ENCODE measurements at regions of chr1 and their contacts with region 1.

Region 1: DNA sequence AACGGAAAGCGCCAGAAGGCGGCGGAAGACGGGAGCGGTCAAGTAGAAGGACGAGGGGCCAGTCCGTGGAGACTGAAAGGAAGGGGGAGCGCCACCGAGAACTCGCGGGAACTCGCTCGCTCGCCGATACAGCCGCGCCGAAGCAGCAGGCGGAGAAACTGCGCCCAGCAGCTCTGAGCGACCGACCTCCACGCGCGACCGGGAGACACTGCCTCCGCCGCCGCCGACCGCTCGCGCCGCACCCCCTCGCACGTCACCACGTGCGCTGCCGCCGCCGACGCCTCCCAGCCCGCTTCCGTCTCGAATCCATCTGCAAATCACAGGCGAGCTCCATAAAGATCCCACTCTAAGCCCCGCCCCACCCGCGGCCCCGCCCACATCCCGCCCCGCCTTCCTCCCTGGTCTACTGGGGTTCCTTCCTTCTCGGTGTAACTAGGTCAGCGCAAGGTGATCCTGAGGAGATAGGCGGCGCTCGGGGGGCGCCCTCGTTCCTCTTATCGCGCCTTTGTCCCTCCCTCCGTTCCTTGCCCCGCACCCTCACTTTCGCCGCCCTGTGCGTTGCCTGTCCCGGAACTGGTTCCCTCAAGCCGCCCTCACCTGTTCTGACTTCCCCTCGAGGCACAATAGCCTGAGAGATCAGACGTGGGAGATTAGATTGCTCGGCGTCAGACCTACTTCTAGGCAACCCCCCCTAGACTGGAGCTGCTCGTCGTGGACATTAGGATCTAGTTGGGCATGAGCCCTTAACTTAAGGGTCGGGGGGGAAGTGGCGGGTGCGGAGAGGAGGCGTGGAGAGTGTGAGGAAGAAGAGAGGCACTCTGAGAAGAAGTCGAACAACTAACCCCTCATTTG is at the start of gene IVNS1ABP:
- DNase-seq: peak; percentile 98
- ATAC-seq: peak; percentile 76
- H3K4me3 ChIP-seq: peak within 1 kb of the TSS; percentile 94 to 98 (median 96)
- H3K4me3 Mint-ChIP-seq: peak within 1 kb of the TSS; percentile 92
- H3K27ac ChIP-seq: peak within 1 kb of the TSS; percentile 95 to 98
- H3K27ac Mint-ChIP-seq: peak within 1 kb of the TSS; percentile 98
- H3K4me1 ChIP-seq: peaks cover 34 to 41% of the 10 kb centered on the region in 2 donors
- H3K4me1 Mint-ChIP-seq: peaks cover 49% of the 10 kb centered on the region
- H3K27me3 ChIP-seq: no peaks in the 10 kb centered on the region
- H3K27me3 Mint-ChIP-seq: no peaks in the 10 kb centered on the region
- CTCF ChIP-seq: peak; percentile 39
- total RNA-seq, gene IVNS1ABP: 87.0 and 93.8 TPM in 2 replicates

Region 2: GRCh38 chr1:183590244-183591191 is 1726.7 kb before region 1 on chr1 and contains the start of gene NCF2:
- CTCF ChIA-PET with region 1: no interaction called
- POLR2A ChIA-PET with region 1: no interaction called
- intact Hi-C with region 1: loop called (anchors 5 kb)
- DNase-seq: peak; percentile 91
- ATAC-seq: peak; percentile 84
- H3K4me3 ChIP-seq: peak within 1 kb of the TSS; percentile 20 to 81 (median 42)
- H3K4me3 Mint-ChIP-seq: peak within 1 kb of the TSS; percentile 37
- H3K27ac ChIP-seq: peak within 1 kb of the TSS; percentile 91 to 93
- H3K27ac Mint-ChIP-seq: peak within 1 kb of the TSS; percentile 95
- H3K4me1 ChIP-seq: peaks cover 61 to 64% of the 10 kb centered on the region in 2 donors
- H3K4me1 Mint-ChIP-seq: peaks cover 60% of the 10 kb centered on the region
- H3K27me3 ChIP-seq: no peaks in the 10 kb centered on the region
- H3K27me3 Mint-ChIP-seq: no peaks in the 10 kb centered on the region
- CTCF ChIP-seq: no peak
- total RNA-seq, gene NCF2: 10.5 and 10.7 TPM in 2 replicates

Region 3: DNA sequence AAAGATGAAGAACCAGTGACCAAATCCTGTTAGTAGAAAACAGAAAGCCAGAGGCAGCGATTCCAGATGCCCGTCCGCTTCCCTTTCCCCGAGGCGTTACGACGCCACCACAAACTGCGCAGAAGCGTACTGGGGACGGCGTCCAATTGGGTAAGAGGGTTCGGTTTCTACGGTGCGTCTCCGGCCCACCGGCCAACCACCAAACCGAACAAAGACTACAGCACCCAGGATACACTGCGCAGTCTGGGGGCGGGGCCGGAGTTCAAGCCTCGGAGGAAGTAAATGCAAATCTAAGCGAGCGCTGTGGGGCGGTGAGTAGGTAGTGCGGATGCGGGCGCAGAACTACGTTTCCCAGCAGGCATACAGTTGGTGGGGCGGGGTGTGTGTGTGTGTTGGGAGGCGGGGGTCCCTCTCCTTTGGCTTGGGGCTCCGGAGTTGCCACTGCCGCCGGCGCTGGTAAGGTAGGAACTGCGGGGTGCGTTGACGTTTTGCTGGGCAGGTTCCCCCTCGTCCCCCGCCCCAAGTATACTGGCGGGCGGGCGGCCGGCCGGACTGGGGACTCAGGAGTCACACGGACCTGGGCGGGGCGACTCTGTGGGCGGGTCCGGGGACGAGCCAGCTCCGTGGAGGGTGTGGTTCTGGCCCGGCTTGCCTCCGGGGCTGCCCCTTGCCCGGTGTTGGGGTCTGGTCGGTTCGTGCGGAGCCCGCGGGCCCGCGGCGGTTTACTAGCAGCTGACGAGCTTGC is 160.2 kb before region 1 on chr1 and contains the starts of genes SWT1 and TRMT1L:
- CTCF ChIA-PET with region 1: interaction called, 9 read pairs
- POLR2A ChIA-PET with region 1: interaction called, 5 read pairs
- intact Hi-C with region 1: loop called (anchors 1 kb)
- DNase-seq: peak; percentile 100
- ATAC-seq: peak; percentile 83
- H3K4me3 ChIP-seq: peak within 1 kb of the TSS; percentile 80 to 99 (median 98)
- H3K4me3 Mint-ChIP-seq: peak within 1 kb of the TSS; percentile 93
- H3K27ac ChIP-seq: peak within 1 kb of the TSS; percentile 98 to 100
- H3K27ac Mint-ChIP-seq: peak within 1 kb of the TSS; percentile 97
- H3K4me1 ChIP-seq: peaks cover 11 to 36% of the 10 kb centered on the region in 2 donors
- H3K4me1 Mint-ChIP-seq: peaks cover 44% of the 10 kb centered on the region
- H3K27me3 ChIP-seq: no peaks in the 10 kb centered on the region
- H3K27me3 Mint-ChIP-seq: no peaks in the 10 kb centered on the region
- CTCF ChIP-seq: no peak
- total RNA-seq, gene SWT1: 8.5 and 9.2 TPM in 2 replicates
- total RNA-seq, gene TRMT1L: 27.5 and 33.2 TPM in 2 replicates

Region 4: GRCh38 chr1:185291652-185292051 is 25.6 kb before region 1 on chr1:
- CTCF ChIA-PET with region 1: no interaction called
- POLR2A ChIA-PET with region 1: no interaction called
- intact Hi-C with region 1: no loop called
- DNase-seq: peak; percentile 49
- ATAC-seq: no peak
- H3K4me3 ChIP-seq: no peak overlapping the region
- H3K4me3 Mint-ChIP-seq: no peak overlapping the region
- H3K27ac ChIP-seq: peak overlapping the region in 1 of 2 donors; percentile 46
- H3K27ac Mint-ChIP-seq: no peak overlapping the region
- H3K4me1 ChIP-seq: peaks cover 14 to 22% of the 10 kb centered on the region in 2 donors
- H3K4me1 Mint-ChIP-seq: peaks cover 24% of the 10 kb centered on the region
- H3K27me3 ChIP-seq: no peaks in the 10 kb centered on the region
- H3K27me3 Mint-ChIP-seq: no peaks in the 10 kb centered on the region
- CTCF ChIP-seq: no peak

Region 5: DNA sequence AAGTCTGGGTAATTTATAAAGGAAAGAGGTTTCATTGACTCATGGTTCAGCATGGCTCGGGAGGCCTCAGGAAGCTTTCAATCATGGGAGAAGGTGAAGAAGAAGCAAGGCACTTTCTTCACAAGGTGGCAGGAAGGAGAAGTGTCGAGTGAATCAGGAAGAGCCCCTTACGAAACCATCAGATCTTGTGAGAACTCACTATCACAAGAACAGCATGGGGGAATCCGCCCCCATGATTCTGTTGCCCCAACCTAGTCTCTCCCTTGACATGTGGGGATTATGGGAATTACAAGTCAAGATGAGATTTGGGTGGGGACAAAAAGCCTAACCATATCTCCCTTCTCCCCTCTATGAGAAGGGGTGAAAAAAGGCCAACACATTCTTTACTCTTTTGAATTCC is 11.0 kb after region 1 on chr1:
- CTCF ChIA-PET with region 1: no interaction called
- POLR2A ChIA-PET with region 1: no interaction called
- intact Hi-C with region 1: no loop called
- DNase-seq: no peak
- ATAC-seq: no peak
- H3K4me3 ChIP-seq: no peak overlapping the region
- H3K4me3 Mint-ChIP-seq: no peak overlapping the region
- H3K27ac ChIP-seq: no peak overlapping the region
- H3K27ac Mint-ChIP-seq: no peak overlapping the region
- H3K4me1 ChIP-seq: no peaks in the 10 kb centered on the region
- H3K4me1 Mint-ChIP-seq: no peaks in the 10 kb centered on the region
- H3K27me3 ChIP-seq: no peaks in the 10 kb centered on the region
- H3K27me3 Mint-ChIP-seq: no peaks in the 10 kb centered on the region
- CTCF ChIP-seq: no peak

Region 6: DNA sequence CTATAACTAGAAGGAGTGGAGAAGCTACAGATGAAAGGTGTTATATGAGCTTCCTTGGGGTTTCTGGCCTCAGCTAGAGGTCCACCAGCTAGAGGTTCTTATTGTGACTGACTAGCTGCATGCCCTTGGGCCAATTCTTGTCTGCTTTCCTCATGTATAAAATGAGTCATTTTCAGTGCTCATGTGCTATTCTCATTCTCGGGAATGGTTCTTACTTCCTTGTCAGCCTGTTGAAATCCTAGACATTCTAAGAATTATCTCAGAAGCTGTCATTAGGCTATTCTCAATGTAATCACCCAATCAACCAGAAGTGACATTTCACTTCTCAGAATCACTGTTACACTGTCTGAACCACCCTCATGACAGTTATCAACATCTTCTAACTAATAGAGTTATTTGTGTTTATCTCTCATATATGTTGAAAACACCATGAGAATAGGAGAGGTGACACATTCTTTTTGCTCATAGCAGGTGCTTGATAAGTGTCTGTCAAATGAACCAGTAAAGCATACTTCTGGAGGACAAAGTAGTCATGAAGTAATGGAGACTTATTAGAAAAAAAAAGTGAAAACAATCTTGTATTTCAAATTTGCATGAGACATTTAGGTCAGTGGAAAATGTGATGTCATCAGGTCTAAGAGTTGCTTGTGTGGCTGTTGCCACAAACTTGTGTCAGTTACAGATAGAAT is 122.6 kb after region 1 on chr1:
- CTCF ChIA-PET with region 1: no interaction called
- POLR2A ChIA-PET with region 1: no interaction called
- intact Hi-C with region 1: loop called (anchors 1 kb)
- DNase-seq: peak; percentile 51
- ATAC-seq: peak; percentile 83
- H3K4me3 ChIP-seq: no peak overlapping the region
- H3K4me3 Mint-ChIP-seq: no peak overlapping the region
- H3K27ac ChIP-seq: peak overlapping the region in 1 of 2 donors; percentile 54
- H3K27ac Mint-ChIP-seq: no peak overlapping the region
- H3K4me1 ChIP-seq: peaks cover 14 to 17% of the 10 kb centered on the region in 2 donors
- H3K4me1 Mint-ChIP-seq: peaks cover 3% of the 10 kb centered on the region
- H3K27me3 ChIP-seq: no peaks in the 10 kb centered on the region
- H3K27me3 Mint-ChIP-seq: no peaks in the 10 kb centered on the region
- CTCF ChIP-seq: no peak

Region 7: DNA sequence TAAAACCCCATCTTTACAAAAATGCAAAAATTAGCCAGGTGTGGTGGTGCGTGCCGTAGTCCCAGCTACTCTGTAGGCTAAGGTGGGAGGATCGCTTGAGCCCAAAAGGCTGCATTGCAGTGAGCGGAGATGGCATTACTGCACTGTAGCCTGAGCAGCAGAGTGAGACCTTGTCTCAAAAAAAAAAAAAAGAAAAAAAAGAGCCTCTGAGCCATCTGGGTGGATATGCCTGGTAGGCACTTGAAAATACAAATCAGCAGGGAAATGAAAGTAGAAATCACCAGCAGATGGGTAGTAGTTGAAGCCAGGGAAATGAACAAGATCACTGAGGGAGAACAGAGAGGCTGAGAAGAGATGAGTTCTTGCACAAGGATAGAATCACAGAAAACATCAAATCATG is 285.9 kb after region 1 on chr1:
- CTCF ChIA-PET with region 1: interaction called, 4 read pairs
- POLR2A ChIA-PET with region 1: interaction called, 8 read pairs
- intact Hi-C with region 1: loop called (anchors 2 kb)
- DNase-seq: peak; percentile 86
- ATAC-seq: peak; percentile 93
- H3K4me3 ChIP-seq: peak overlapping the region in 1 of 5 experiments; percentile 42
- H3K4me3 Mint-ChIP-seq: no peak overlapping the region
- H3K27ac ChIP-seq: peak overlapping the region; percentile 27 to 56
- H3K27ac Mint-ChIP-seq: no peak overlapping the region
- H3K4me1 ChIP-seq: peaks cover 54 to 68% of the 10 kb centered on the region in 2 donors
- H3K4me1 Mint-ChIP-seq: peaks cover 31% of the 10 kb centered on the region
- H3K27me3 ChIP-seq: no peaks in the 10 kb centered on the region
- H3K27me3 Mint-ChIP-seq: no peaks in the 10 kb centered on the region
- CTCF ChIP-seq: no peak

Region 8: DNA sequence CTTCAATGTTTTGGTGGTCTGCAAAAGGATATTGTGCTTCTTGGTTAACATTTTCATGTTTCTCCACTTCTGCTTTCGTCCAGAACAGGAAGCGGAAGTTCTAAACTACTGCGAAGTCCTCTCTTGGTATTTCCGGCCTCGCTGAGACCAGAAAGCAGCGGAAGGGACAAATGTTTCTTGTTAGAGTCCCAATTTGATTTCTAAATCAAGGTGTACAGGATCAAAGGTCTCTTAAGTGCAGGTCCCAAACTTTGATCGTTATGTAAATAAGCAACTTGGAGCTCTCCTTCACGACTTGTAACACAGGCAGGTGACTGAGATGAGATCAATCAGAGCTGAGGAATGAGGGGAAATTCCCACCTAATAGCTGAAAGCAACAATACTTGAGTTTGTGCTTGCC is 376.8 kb after region 1 on chr1:
- CTCF ChIA-PET with region 1: interaction called, 14 read pairs
- POLR2A ChIA-PET with region 1: interaction called, 8 read pairs
- intact Hi-C with region 1: loop called (anchors 1 kb)
- DNase-seq: peak; percentile 88
- ATAC-seq: peak; percentile 81
- H3K4me3 ChIP-seq: peak overlapping the region; percentile 30 to 67 (median 52)
- H3K4me3 Mint-ChIP-seq: peak overlapping the region; percentile 91
- H3K27ac ChIP-seq: peak overlapping the region; percentile 95 to 96
- H3K27ac Mint-ChIP-seq: peak overlapping the region; percentile 98
- H3K4me1 ChIP-seq: peaks cover 18 to 19% of the 10 kb centered on the region in 2 donors
- H3K4me1 Mint-ChIP-seq: peaks cover 22% of the 10 kb centered on the region
- H3K27me3 ChIP-seq: peaks cover 0 to 2% (median 0%) of the 10 kb centered on the region in 4 experiments
- H3K27me3 Mint-ChIP-seq: peaks cover 25% of the 10 kb centered on the region
- CTCF ChIP-seq: no peak

Measured in B cell (primary cell).